Activated T-helper 1 cell treated with anti-CD3 and anti-CD28 coated beads, Interleukin-12 subunit alpha, Interleukin-12 subunit beta, Interleukin-2, Interleukin-4 antibody, amounts not matched to agents 30 ng/mL and 10 ng/mL and 1 ng/mL, durations not matched to agents 14 hours and 24 hours and 36 hours (primary cell): ENCODE measurements at regions of chr5 and their contacts with region 1.

Region 1: DNA sequence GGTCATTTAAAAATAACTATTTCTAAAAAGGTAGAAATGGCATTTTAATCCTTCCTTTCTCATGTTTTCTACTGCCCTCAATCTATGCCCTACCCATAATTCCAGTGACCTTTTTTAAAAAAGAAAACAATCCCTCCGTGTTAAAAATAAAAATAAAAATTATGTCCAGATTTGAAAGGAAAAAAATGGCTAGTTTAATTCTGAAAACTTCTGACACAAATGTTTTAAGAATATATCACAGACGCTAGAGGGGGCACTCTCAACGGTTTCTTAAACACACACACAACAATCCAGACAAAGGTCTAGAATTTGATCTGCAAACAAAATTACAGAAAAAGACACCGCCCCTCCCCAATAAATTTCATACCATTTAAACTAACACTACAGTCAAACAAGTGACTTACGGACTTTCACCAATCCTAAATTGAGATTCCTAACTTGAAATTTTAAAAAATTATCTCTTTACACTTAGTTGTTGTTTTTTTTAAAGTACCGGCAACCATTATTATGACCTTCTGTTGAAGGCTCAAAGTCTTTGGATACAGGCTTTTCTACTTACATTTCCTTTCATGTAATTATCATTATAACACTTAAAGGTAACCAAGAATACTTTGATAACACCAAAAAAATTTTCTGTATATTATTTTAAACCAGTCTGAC is 38.2 kb downstream of the CLINT1 start:
- DNase-seq: no peak
- H3K4me3 Mint-ChIP-seq: no peak overlapping the region
- H3K27ac Mint-ChIP-seq: no peak overlapping the region
- H3K4me1 Mint-ChIP-seq: peaks cover 25% of the 10 kb centered on the region
- H3K27me3 Mint-ChIP-seq: no peaks in the 10 kb centered on the region

Region 2: GRCh38 chr5:157761690-157762621 is 58.8 kb before region 1 on chr5:
- intact Hi-C with region 1: loop called (anchors 2 kb)
- DNase-seq: peak; percentile 11
- H3K4me3 Mint-ChIP-seq: no peak overlapping the region
- H3K27ac Mint-ChIP-seq: no peak overlapping the region
- H3K4me1 Mint-ChIP-seq: peaks cover 8% of the 10 kb centered on the region
- H3K27me3 Mint-ChIP-seq: peaks cover 2% of the 10 kb centered on the region

Region 3: GRCh38 chr5:157917899-157918809 is 97.4 kb after region 1 on chr5:
- intact Hi-C with region 1: loop called (anchors 1 kb)
- DNase-seq: peak; percentile 33
- H3K4me3 Mint-ChIP-seq: no peak overlapping the region
- H3K27ac Mint-ChIP-seq: no peak overlapping the region
- H3K4me1 Mint-ChIP-seq: peaks cover 30% of the 10 kb centered on the region
- H3K27me3 Mint-ChIP-seq: no peaks in the 10 kb centered on the region

Region 4: GRCh38 chr5:157948738-157949410 is 128.2 kb after region 1 on chr5:
- intact Hi-C with region 1: loop called (anchors 1 kb)
- DNase-seq: peak; percentile 58
- H3K4me3 Mint-ChIP-seq: no peak overlapping the region
- H3K27ac Mint-ChIP-seq: no peak overlapping the region
- H3K4me1 Mint-ChIP-seq: peaks cover 5% of the 10 kb centered on the region
- H3K27me3 Mint-ChIP-seq: peaks cover 14% of the 10 kb centered on the region

Region 5: DNA sequence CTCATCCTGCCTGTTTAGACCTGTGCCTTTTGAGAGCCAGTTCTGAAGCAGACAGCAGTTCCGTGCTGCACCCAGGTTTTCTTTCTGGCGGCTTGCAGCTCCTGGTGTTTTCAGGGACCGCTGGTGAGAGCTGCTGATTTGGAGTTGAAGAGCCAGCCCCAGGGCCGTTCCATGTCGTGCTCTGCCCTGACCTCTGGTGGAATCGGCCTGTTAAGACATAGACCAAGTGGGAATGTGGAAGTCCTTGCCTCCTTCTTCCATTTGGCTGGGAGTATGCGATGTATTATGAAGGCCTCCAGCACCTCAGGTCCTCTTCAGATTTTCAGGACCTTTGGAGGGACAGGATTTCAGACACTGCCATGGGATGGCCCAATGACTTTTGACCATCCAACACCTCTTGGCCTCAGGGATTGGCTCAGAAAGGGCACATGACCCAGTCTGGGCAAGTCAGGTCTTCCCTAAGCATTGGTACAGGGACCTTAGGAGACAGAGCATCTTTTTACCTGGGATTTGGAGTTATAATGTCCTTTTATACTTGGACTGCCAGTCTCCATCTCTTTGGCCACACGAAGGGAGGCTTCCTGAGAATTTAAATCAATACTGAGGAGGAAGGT is 174.3 kb after region 1 on chr5:
- intact Hi-C with region 1: loop called (anchors 1 kb)
- DNase-seq: peak; percentile 30
- H3K4me3 Mint-ChIP-seq: peak overlapping the region; percentile 37
- H3K27ac Mint-ChIP-seq: no peak overlapping the region
- H3K4me1 Mint-ChIP-seq: peaks cover 18% of the 10 kb centered on the region
- H3K27me3 Mint-ChIP-seq: peaks cover 39% of the 10 kb centered on the region

Region 6: DNA sequence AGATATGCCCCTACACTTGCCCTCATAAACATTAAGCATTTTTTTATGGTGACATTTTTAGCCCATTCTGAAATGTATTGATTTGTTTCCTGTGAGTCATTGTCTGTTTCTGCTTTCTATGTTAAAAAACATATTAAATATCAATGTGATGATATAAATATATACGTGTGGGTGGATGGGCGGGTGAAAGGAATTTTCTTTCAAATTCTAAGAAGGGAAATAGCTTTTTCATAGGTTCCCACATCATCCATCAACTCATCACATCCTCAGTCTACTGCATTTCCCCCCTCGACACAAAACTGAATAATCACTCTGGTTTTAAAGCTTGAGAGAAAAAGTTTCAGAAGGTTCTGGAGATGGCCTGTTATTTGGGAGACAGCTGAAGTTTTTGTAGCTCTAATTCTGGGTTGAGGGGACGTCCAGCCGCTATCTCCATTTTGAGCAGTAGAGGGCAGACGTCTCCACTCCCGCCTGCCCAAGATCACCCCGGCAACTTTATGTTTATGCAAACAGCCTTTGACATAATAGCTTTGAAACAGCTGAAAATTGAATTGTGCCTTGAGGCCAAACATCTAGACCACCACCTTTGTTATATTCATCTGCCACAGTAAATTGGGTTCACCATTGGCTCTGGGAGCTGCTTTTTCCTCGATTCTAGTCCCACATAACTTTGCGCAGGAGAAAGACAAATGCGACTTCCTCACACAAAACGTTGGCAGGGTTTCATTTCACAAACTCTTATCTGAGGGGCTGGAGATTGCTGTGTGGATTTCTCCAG is 254.5 kb after region 1 on chr5:
- intact Hi-C with region 1: loop called (anchors 10 kb)
- DNase-seq: peak; percentile 12
- H3K4me3 Mint-ChIP-seq: no peak overlapping the region
- H3K27ac Mint-ChIP-seq: no peak overlapping the region
- H3K4me1 Mint-ChIP-seq: no peaks in the 10 kb centered on the region
- H3K27me3 Mint-ChIP-seq: peaks cover 16% of the 10 kb centered on the region